ENCODE measurements at regions of chr1 and their contacts with region 1.

Region 1: DNA sequence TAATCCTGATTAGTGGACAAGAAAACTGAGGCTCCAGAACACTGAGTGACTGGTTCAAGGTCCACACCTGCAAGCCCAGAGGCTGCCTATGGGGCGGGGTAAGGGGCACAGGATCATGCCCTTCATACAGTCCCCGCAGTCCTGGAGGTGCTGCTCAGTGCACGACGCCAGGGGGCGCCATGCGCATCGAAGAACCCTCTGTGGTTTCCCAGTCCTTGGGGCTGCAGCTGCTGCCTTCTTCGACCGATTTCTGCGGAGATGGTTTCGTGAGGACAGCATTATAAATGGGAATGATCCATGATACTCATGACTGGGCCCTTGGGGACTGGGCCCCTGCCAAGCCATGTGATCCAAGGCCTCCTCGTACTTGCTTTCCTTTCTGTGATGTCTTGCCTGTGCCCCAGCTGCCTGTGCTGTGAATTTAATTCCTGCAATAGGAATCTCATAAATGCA is 37.1 kb upstream of the ARHGEF10L start:
- DNase-seq: no peak
- H3K4me3 ChIP-seq: no peak overlapping the region
- H3K27ac ChIP-seq: peak overlapping the region; percentile 13 to 71 (median 67)
- H3K4me1 ChIP-seq: peaks cover 3 to 12% (median 6%) of the 10 kb centered on the region in 3 donors
- H3K27me3 ChIP-seq: no peaks in the 10 kb centered on the region
- CTCF ChIP-seq: peak; percentile 70 to 96 (median 91)
- POLR2A ChIP-seq: no peak

Region 2: GRCh38 chr1:17545356-17545755 is 43.0 kb after region 1 on chr1:
- intact Hi-C with region 1: no loop called
- DNase-seq: no peak
- H3K4me3 ChIP-seq: peak overlapping the region in 1 of 4 donors; percentile 19
- H3K27ac ChIP-seq: peak overlapping the region; percentile 82 to 88 (median 86)
- H3K4me1 ChIP-seq: peaks cover 26 to 83% (median 39%) of the 10 kb centered on the region in 3 donors
- H3K27me3 ChIP-seq: peaks cover 0 to 7% (median 0%) of the 10 kb centered on the region in 4 donors
- CTCF ChIP-seq: no peak
- POLR2A ChIP-seq: no peak

Region 3: GRCh38 chr1:17606826-17607440 is 104.6 kb after region 1 on chr1:
- intact Hi-C with region 1: loop called (anchors 2 kb)
- DNase-seq: no peak
- H3K4me3 ChIP-seq: no peak overlapping the region
- H3K27ac ChIP-seq: peak overlapping the region in 3 of 4 donors; percentile 72 to 74 (median 72)
- H3K4me1 ChIP-seq: peaks cover 5 to 34% (median 11%) of the 10 kb centered on the region in 3 donors
- H3K27me3 ChIP-seq: no peaks in the 10 kb centered on the region
- CTCF ChIP-seq: peak; percentile 76 to 95 (median 89)
- POLR2A ChIP-seq: no peak